Aorta (tissue), 5 donors: ENCODE measurements at regions of chr3 and their contacts with region 1.

Region 1: DNA sequence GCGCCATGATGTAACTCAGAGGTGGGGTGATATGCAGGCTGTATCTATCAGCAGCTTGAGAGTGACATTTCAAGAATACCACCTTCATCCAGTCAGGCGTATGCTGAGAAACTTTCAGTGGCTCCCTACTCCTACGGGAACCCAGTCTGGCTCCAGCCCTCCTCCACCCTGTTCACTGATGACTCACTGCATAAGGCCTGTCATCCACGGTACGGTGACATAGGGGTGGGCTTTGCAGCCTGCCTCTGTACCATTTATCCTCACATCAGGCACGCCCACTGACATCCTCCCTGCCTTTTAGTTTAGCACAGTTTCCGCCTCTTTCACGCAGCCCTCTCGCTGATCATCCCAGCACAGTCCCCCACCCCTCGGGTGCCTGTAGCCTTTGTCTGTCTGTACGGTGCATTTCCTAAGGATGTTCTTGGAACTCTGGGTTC is 11.7 kb downstream of the PXYLP1 start:
- DNase-seq: no peak
- ATAC-seq: no peak
- H3K4me3 ChIP-seq: no peak overlapping the region
- H3K27ac ChIP-seq: no peak overlapping the region
- H3K4me1 ChIP-seq: peaks cover 7 to 17% of the 10 kb centered on the region in 2 donors
- H3K27me3 ChIP-seq: no peaks in the 10 kb centered on the region

Region 2: DNA sequence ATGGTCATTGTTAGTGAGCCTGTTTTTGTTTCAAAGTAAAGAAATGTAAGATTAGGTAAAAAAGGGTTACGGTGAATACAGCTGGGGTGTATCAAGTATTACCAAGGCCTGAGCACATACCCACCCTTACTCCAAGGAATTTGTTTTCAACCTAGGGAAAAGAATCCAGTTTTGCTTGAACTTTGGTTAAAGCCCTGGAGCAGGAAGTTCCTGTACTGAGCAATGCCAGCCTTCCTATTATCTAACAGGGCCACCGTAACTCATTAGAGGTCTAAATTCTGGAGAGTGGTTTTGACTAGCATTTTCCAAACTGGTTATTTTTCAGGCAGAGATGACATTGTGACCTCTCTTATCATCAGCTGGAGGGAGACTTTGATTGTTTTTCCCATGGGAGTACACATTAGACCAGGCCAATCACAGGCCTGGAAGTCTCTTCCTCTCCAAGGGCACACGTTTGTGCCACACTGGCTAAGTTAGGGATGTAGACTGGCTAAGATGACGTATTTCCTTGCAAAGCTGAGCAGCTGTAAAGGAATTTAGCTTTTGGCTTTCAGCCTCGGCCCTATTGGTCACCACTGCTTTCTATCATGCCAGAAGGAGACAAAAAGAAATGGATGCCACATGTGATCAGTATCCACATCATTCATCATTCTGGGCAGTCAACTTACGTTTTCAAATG is 467.4 kb after region 1 on chr3:
- intact Hi-C with region 1: loop called in 1 of 2 experiments (anchors 5 kb)
- DNase-seq: peak in 1 of 2 donors; percentile 67
- ATAC-seq: peak; percentile 54
- H3K4me3 ChIP-seq: no peak overlapping the region
- H3K27ac ChIP-seq: peak overlapping the region; percentile 62 to 92
- H3K4me1 ChIP-seq: no peaks in the 10 kb centered on the region
- H3K27me3 ChIP-seq: no peaks in the 10 kb centered on the region